OCI-LY7 (cell line): ENCODE measurements at regions of chr14 and their contacts with region 1.

Region 1: GRCh38 chr14:99683619-99684355 is at the start of gene CYP46A1:
- DNase-seq: peak; percentile 100
- H3K4me3 ChIP-seq: peak within 1 kb of the TSS; percentile 89
- H3K27ac ChIP-seq: peak within 1 kb of the TSS; percentile 60
- H3K4me1 ChIP-seq: peaks cover 42% of the 10 kb centered on the region
- CTCF ChIP-seq: no peak
- total RNA-seq, gene CYP46A1: 2.0 and 4.1 TPM in 2 replicates

Region 2: DNA sequence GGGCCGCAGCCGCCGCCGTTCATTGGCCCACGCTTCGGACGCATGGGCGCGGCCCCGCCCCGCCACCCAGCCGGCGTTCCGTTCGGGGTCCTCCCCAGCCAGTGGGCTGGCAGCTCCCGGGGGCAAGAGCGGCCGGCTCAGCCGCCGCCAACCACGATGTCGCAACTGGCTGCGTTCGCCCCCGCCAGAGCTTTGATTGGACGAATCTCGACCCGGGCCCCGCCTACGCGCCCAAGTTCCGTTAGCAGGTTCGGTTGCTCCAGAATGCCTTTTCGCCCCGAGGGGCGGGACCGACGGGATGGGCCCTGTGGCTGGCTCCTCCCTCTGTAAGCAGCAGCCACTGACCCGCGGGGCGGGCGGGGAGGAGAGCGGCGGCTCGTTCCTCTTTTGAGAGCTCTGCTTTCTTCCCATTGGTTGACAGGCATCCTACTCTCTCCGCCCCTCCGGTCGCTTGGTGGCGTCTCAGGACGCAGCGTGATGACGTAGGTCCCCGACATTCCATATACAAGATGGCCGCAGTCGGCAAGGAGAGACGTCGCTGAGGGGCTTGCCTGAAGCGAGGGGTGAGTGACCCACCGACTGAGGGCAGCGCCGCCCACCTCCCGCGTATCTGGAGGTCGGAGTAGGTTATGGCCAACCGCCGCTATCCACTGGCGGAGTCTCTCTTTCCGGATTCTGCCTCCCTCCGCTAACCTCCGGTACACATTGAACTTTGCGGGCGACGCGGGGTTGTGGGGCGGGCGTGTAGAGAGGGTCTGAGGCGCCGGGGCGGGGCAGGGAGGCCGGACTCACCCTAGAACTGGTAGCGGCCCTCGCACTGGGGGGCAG is 202.7 kb before region 1 on chr14 and contains the start of gene CCNK:
- CTCF ChIA-PET with region 1: interaction called, 3 read pairs
- POLR2A ChIA-PET with region 1: interaction called, 3 read pairs
- intact Hi-C with region 1: loop called (anchors 2 kb)
- DNase-seq: peak; percentile 100
- H3K4me3 ChIP-seq: peak within 1 kb of the TSS; percentile 95
- H3K27ac ChIP-seq: peak within 1 kb of the TSS; percentile 38
- H3K4me1 ChIP-seq: peaks cover 23% of the 10 kb centered on the region
- CTCF ChIP-seq: no peak
- total RNA-seq, gene CCNK: 25.1 and 38.8 TPM in 2 replicates

Region 3: DNA sequence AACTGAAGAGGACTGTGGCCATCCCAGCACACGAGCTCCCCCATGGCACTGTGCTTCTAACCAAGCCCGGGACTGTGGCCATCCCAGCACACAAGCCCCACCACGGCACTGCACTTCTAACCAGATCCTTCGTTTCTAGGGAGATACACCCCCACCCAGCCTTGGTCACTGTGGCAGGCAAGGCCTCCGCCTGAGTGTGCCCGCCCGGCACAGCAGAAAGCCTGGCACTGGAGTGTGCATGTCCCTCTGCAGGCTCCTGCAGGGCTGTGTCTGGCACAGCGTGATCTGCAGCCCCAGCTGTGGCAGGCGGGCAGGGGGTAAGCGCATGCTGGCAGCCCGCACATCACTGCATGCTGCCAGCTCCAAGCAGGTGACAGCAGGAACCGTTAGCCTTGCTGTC is 129.6 kb before region 1 on chr14:
- CTCF ChIA-PET with region 1: no interaction called
- POLR2A ChIA-PET with region 1: no interaction called
- intact Hi-C with region 1: no loop called
- DNase-seq: no peak
- H3K4me3 ChIP-seq: no peak overlapping the region
- H3K27ac ChIP-seq: no peak overlapping the region
- H3K4me1 ChIP-seq: no peaks in the 10 kb centered on the region
- CTCF ChIP-seq: no peak

Region 4: DNA sequence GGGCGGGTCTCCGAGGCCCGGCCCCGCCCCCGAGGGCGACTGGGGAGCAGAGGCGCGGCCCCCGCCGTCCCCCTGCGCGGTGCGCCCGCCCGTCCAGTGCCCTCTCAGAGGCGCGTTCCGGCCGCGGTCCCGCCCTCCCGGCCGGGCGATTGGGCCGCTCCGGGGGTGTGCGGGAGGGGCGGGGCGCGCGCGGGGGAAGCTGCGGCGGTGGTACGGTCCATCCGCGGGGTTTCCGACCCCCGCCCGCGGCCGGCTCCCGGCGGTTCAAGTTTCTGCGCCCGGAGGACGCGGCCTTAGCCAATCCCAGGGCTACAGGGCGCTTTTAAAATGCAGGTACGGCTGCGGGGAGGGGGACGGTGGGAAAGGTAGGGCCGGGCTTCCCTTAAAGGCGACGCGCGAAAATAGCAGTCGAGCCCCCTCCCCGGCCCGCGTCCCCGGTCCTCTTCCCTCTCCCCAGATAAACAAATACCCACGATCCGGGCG is 79.5 kb before region 1 on chr14:
- CTCF ChIA-PET with region 1: no interaction called
- POLR2A ChIA-PET with region 1: interaction called, 3 read pairs
- intact Hi-C with region 1: loop called (anchors 1 kb)
- DNase-seq: peak; percentile 97
- H3K4me3 ChIP-seq: peak overlapping the region; percentile 90
- H3K27ac ChIP-seq: peak overlapping the region; percentile 74
- H3K4me1 ChIP-seq: peaks cover 27% of the 10 kb centered on the region
- CTCF ChIP-seq: no peak

Region 5: GRCh38 chr14:99693918-99694317 is 10.1 kb after region 1 on chr14:
- CTCF ChIA-PET with region 1: no interaction called
- POLR2A ChIA-PET with region 1: no interaction called
- intact Hi-C with region 1: no loop called
- DNase-seq: no peak
- H3K4me3 ChIP-seq: no peak overlapping the region
- H3K27ac ChIP-seq: no peak overlapping the region
- H3K4me1 ChIP-seq: no peaks in the 10 kb centered on the region
- CTCF ChIP-seq: no peak

Region 6: GRCh38 chr14:99793213-99794150 is 109.7 kb after region 1 on chr14 and contains the start of gene EML1:
- CTCF ChIA-PET with region 1: no interaction called
- POLR2A ChIA-PET with region 1: no interaction called
- intact Hi-C with region 1: loop called (anchors 5 kb)
- DNase-seq: peak; percentile 78
- H3K4me3 ChIP-seq: peak within 1 kb of the TSS; percentile 47
- H3K27ac ChIP-seq: no peak within 1 kb of the TSS
- H3K4me1 ChIP-seq: peaks cover 3% of the 10 kb centered on the region
- CTCF ChIP-seq: no peak
- total RNA-seq, gene EML1: not detected in 2 replicates

Region 7: DNA sequence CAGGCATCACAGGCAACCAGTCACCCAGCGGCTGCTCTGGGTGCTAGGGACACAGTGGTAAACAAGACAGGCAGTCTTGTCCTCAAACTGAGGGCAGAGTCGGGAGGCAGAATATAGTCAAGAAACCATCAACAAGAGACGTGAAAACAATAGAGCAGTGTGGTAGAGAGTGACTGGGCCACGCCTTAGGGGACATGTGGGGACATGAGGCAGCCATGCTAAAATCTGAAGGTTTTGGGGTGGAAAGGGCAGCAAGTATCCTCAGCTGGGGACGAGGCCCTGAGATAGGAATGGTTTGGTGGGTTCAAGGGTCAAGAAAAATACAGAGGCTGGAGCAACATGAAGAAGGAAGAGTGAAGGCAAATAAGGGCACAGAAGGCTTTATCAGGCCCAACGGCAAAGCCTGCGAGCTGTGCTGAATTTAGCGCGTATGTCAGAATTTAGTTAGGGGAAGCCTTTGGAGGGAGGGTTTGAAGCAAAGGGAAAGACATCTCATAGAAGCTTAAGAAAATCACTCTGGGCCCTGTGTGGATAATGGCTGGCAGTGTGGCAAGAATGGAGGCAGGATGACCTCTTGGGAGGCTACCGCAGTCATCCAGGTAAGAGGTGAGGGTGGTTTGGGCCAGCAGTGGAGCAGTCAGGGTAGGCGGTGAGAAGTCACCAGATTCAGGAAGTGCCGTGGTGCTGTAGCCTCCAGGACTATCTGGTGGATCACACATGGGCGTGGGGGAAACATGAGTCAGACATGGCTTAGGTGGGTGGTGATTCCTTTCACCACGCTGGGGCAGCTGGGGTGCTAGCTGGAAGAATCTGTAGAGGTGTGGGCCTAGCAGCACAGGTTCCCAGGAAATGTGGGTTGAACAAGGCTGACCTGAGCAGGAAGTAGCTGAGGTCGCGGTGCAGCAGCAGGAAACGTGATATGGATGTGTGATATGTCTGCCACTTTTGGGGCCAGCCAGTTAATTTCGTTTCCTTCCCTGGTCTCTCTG is 384.5 kb after region 1 on chr14:
- CTCF ChIA-PET with region 1: no interaction called
- POLR2A ChIA-PET with region 1: no interaction called
- intact Hi-C with region 1: loop called (anchors 5 kb)
- DNase-seq: peak; percentile 75
- H3K4me3 ChIP-seq: peak overlapping the region; percentile 74
- H3K27ac ChIP-seq: peak overlapping the region; percentile 99
- H3K4me1 ChIP-seq: peaks cover 97% of the 10 kb centered on the region
- CTCF ChIP-seq: no peak